Ovary (tissue), 10 donors: ENCODE measurements at regions of chr2 and their contacts with region 1.

Region 1: GRCh38 chr2:218852911-218853667 is 6.5 kb upstream of the WNT6 start:
- DNase-seq: peak in 3 of 5 donors; percentile 52 to 72 (median 68)
- H3K4me3 ChIP-seq: no peak overlapping the region
- H3K27ac ChIP-seq: no peak overlapping the region
- H3K4me1 ChIP-seq: no peaks in the 10 kb centered on the region
- H3K27me3 ChIP-seq: no peaks in the 10 kb centered on the region
- CTCF ChIP-seq: peak in 2 of 3 donors; percentile 38 to 52
- EP300 ChIP-seq: no peak
- POLR2A ChIP-seq: no peak

Region 2: DNA sequence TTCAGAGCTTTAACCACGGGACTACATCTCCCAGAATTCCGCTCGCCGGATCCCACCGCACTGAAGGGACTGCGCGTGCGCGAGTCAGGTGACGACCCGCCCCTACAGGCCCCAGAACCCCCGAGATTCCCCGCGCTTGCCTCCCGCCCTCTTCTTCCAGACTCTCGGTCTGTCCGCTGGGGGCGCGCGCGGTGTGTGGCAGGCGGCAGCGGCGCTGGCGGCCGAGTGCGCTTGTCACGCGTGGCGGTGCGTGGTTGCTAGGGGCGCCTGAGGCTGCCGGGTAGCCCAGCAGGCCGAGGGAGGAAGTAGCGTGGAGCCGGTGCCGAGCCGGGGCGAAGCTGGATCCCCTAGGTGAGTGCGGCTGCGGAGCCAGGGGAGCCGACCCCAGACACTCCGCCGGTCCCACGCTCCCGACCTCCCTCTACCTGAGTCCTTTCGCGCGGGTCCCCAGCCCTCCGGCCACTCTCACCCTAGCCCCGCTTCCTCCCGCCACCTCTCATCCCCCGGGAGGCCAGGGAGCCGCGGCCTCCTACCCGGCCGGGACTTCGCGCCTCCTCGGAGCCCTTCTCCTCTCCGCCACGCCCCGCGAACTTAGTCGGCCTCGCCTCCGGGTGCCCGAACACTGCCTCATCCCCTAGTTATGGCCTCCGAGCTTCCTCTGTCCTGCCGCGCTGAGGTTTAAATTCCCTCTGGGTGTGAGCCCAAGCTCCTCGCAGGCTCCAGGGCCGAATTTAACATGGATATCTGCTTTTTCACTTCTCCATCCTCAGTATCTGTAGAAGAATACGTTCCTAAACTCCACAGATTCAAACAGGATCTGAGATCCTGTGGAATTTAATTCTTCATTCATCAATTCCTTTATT is 142.2 kb before region 1 on chr2 and contains the start of gene TTLL4:
- intact Hi-C with region 1: loop called in 2 of 4 experiments (anchors 5 to 10 kb)
- DNase-seq: peak; percentile 98 to 99 (median 98)
- H3K4me3 ChIP-seq: peak within 1 kb of the TSS; percentile 95
- H3K27ac ChIP-seq: peak within 1 kb of the TSS; percentile 74 to 81
- H3K4me1 ChIP-seq: no peaks in the 10 kb centered on the region
- H3K27me3 ChIP-seq: no peaks in the 10 kb centered on the region
- CTCF ChIP-seq: peak; percentile 84 to 98 (median 96)
- EP300 ChIP-seq: no peak
- POLR2A ChIP-seq: peak; percentile 58
- total RNA-seq, gene TTLL4: 12.4 to 19.6 (median 17.6) TPM

Region 3: GRCh38 chr2:218733171-218734021 is 119.7 kb before region 1 on chr2:
- intact Hi-C with region 1: no loop called
- DNase-seq: no peak
- H3K4me3 ChIP-seq: no peak overlapping the region
- H3K27ac ChIP-seq: no peak overlapping the region
- H3K4me1 ChIP-seq: peaks cover 1% of the 10 kb centered on the region
- H3K27me3 ChIP-seq: no peaks in the 10 kb centered on the region
- CTCF ChIP-seq: no peak
- EP300 ChIP-seq: no peak
- POLR2A ChIP-seq: no peak